Mammary epithelial cell (primary cell): ENCODE measurements at regions of chr22 and their contacts with region 1.

Region 1: GRCh38 chr22:42462016-42462415 is 29.8 kb upstream of the NFAM1 start:
- DNase-seq: no peak
- H3K4me3 ChIP-seq: no peak overlapping the region
- H3K27ac ChIP-seq: no peak overlapping the region
- H3K4me1 ChIP-seq: no peaks in the 10 kb centered on the region
- H3K27me3 ChIP-seq: no peaks in the 10 kb centered on the region
- CTCF ChIP-seq: no peak

Region 2: DNA sequence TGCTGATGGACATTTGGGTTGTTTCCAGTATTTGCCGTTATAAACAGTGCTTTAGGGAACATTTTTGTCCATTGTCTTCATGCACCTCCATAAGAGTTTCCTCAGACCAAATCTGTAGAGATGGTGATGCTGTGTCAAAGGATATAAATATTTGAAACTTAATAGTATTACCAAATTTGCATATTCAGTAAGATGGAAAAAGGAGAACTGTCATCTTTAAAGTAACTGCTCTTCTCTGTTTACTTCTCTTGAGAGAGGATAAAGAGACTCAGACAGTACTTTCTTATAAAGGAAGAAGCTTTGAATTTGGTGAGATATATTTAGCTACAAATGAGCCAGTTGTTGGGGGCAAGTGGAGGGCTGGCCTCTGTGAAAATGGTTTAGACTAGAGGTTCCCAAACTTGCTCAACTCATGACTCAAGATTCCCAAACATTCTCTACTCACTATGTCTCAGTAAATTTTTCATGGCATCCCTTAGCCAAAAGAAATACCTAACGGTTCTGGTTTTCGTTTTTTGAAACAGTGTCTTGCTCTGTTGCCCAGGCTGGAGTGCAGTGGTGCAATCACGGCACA is 573.3 kb before region 1 on chr22:
- CTCF ChIA-PET with region 1: no interaction called
- dilution Hi-C with region 1: loop called (anchors 10 kb)
- in situ Hi-C with region 1: no loop called
- intact Hi-C with region 1: no loop called
- DNase-seq: no peak
- H3K4me3 ChIP-seq: no peak overlapping the region
- H3K27ac ChIP-seq: no peak overlapping the region
- H3K4me1 ChIP-seq: no peaks in the 10 kb centered on the region
- H3K27me3 ChIP-seq: no peaks in the 10 kb centered on the region
- CTCF ChIP-seq: no peak

Region 3: DNA sequence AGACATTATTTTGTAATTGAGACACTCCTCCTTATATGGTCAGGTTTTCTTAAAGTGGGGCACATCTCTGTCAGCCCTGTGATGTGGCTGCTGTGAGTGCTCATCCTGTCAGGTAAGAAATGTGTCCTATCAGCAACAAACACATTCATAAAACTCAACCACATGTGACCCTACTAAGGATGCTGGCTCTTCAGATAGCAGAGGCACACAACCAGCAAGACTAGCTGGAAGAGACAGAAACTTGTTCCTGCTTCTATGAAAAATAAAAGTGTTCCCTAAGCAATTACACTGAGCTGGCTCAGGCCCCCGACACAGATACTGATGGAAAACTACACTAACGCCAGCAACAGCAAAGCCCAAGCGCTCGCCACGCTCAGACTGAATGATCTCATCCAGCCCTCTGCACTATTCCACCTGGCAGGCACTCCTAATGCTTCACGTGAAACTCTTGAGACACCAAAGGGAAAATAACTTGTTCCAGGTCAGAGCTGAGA is 281.6 kb before region 1 on chr22:
- CTCF ChIA-PET with region 1: no interaction called
- dilution Hi-C with region 1: loop called (anchors 10 kb)
- in situ Hi-C with region 1: no loop called
- intact Hi-C with region 1: no loop called
- DNase-seq: no peak
- H3K4me3 ChIP-seq: no peak overlapping the region
- H3K27ac ChIP-seq: no peak overlapping the region
- H3K4me1 ChIP-seq: peaks cover 8% of the 10 kb centered on the region
- H3K27me3 ChIP-seq: no peaks in the 10 kb centered on the region
- CTCF ChIP-seq: no peak

Region 4: GRCh38 chr22:42500161-42500835 is 38.3 kb after region 1 on chr22:
- CTCF ChIA-PET with region 1: no interaction called
- dilution Hi-C with region 1: loop called (anchors 5 kb)
- in situ Hi-C with region 1: no loop called
- intact Hi-C with region 1: no loop called
- DNase-seq: peak; percentile 71
- H3K4me3 ChIP-seq: peak overlapping the region in 2 of 3 experiments; percentile 21 to 38
- H3K27ac ChIP-seq: no peak overlapping the region
- H3K4me1 ChIP-seq: peaks cover 9% of the 10 kb centered on the region
- H3K27me3 ChIP-seq: no peaks in the 10 kb centered on the region
- CTCF ChIP-seq: no peak